Cardiac septum (tissue), 1 donor: ENCODE measurements at regions of chr18 and their contacts with region 1.

Region 1: GRCh38 chr18:63823518-63824219 is 48.5 kb downstream of the SERPINB7 start:
- DNase-seq: no peak

Region 2: DNA sequence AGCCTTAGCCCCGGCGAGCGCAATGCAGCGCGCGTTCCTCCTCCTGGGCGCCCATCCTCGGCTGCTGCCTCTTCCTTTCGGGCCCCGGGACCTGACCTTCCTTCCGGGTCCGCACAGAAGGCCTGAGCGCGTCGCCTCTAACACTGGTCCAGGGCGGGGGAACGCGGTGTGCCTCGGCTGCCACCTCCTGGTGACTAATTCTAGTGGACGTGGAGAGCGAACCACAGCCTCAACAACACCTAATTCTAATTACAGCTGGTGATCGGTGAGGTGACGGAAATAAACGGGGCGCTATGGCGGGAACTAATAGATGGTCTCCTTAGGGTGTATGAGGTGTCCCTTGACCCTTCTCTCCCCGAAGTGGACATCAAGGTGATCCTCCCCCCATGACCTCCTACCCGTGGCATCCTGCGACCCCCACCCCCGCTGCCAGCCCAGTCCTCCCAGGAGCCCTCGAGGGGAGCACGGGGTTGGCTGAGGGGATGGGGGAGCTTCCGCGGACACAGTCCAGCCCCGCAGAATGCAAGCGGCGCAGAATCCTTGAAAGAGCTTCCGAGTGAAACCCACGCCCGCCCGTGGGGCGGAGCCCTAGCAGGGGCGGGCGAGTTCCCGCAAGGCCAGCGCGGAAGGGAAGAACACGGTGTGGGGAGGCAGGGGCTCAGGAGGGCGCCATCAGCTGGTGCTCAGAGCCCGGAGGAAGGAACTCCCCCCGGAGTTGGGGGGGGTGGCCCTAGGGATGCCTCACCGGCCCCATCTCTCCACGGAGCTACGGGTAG is 112.7 kb after region 1 on chr18:
- intact Hi-C with region 1: loop called (anchors 10 kb)
- DNase-seq: peak; percentile 96